ENCODE measurements at regions of chr11 and their contacts with region 1.

Region 1: DNA sequence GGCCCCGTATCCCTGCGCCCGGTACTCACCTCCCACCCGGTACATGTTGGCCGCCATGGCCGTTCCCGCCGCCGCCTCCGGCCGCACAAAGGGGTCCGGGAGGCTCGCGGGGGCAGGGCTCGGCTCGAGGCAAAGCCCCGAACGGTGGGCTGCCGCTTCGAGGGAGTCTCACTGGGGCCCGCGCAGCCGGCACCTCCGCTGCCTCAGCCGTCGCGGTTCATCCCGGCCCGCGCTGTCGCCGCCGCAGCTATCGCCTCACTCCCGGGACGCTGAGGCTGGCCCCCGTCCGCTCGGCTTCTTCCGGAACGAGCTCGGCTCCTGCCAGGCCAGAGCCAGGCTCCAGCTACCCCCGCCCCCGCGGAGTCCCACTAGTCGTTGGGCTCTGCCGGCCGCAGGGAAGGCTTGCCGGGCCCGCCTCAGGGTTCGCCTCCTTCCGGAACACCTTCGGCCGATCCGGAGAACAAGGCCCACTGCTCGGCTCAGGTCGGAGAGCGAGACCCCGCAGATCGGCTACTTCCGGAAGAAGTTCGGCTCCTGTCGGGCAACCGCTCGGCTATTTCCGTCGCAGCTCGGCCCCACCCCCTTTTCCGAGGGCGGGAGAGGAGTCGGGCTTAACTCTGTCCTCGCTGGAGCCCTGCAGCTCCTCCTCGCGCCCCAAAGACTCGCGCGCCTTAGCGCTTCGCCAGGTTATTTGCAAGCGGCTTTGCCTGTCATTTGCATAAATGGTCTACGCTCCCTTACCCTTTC is at the start of gene MTA2:
- DNase-seq: peak; percentile 95 to 100 (median 99)
- ATAC-seq: peak; percentile 82 to 83
- H3K4me3 Mint-ChIP-seq: peak within 1 kb of the TSS; percentile 88 to 95 (median 92)
- H3K27ac Mint-ChIP-seq: peak within 1 kb of the TSS; percentile 93 to 97 (median 96)
- H3K4me1 Mint-ChIP-seq: peaks cover 37 to 66% (median 62%) of the 10 kb centered on the region in 4 donors
- H3K27me3 Mint-ChIP-seq: no peaks in the 10 kb centered on the region
- polyA plus RNA-seq, gene MTA2: 15.8 to 32.6 (median 21.5) TPM

Region 2: GRCh38 chr11:62497132-62497915 is 104.2 kb before region 1 on chr11:
- POLR2A ChIA-PET with region 1: no interaction called
- DNase-seq: peak in 2 of 10 donors; percentile 8 to 9
- ATAC-seq: peak; percentile 20 to 52
- H3K4me3 Mint-ChIP-seq: no peak overlapping the region
- H3K27ac Mint-ChIP-seq: peak overlapping the region in 2 of 10 donors; percentile 3 to 14
- H3K4me1 Mint-ChIP-seq: peaks cover 0 to 11% (median 1%) of the 10 kb centered on the region in 4 donors
- H3K27me3 Mint-ChIP-seq: peaks cover under 1 to 9% (median 7%) of the 10 kb centered on the region in 5 donors

Region 3: DNA sequence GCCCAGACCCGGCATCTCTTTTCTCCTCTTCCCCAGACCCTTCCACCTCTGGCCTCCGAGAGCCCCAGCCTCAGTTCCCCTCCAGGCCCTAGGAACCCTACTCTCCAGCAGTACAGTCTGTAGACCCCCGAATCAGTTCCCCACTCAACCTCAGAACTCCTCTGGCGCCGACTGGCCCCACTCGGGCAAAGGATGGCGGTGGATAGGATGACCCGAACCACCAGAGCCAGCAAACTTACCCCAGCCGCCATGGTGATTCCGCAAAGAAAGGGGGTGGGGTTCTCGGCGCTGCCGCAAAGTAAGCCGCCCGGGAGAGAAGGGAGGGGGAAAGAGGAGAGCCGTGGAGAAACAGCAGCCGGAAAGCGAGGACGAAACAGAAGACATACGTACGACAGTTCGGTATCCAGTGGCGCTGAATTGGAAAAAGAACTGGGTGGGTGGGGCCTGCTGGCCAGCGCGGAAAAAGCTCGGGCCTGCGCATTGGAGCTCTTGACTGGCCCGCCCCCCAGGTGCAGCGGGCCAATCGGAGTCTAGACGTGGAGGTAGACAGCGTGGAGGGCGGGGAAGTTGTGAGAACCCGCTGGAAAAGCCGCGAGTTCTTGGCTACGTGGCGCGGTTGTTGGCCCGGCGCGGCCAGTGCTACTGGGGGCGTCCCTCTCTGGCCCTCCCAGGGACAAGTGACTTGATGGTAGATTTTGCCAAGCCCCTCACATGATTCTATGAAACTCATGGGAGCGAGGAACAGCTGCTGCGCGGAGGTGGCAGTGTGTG is 27.8 kb before region 1 on chr11 and contains the start of gene EEF1G:
- POLR2A ChIA-PET with region 1: interaction called, 18 read pairs
- DNase-seq: peak; percentile 94 to 100 (median 98)
- ATAC-seq: peak; percentile 91 to 92
- H3K4me3 Mint-ChIP-seq: peak within 1 kb of the TSS; percentile 93 to 99 (median 97)
- H3K27ac Mint-ChIP-seq: peak within 1 kb of the TSS; percentile 90 to 99 (median 98)
- H3K4me1 Mint-ChIP-seq: peaks cover 41 to 59% (median 53%) of the 10 kb centered on the region in 4 donors
- H3K27me3 Mint-ChIP-seq: no peaks in the 10 kb centered on the region
- polyA plus RNA-seq, gene EEF1G: 1,637 to 2,152 (median 1,960) TPM

Region 4: DNA sequence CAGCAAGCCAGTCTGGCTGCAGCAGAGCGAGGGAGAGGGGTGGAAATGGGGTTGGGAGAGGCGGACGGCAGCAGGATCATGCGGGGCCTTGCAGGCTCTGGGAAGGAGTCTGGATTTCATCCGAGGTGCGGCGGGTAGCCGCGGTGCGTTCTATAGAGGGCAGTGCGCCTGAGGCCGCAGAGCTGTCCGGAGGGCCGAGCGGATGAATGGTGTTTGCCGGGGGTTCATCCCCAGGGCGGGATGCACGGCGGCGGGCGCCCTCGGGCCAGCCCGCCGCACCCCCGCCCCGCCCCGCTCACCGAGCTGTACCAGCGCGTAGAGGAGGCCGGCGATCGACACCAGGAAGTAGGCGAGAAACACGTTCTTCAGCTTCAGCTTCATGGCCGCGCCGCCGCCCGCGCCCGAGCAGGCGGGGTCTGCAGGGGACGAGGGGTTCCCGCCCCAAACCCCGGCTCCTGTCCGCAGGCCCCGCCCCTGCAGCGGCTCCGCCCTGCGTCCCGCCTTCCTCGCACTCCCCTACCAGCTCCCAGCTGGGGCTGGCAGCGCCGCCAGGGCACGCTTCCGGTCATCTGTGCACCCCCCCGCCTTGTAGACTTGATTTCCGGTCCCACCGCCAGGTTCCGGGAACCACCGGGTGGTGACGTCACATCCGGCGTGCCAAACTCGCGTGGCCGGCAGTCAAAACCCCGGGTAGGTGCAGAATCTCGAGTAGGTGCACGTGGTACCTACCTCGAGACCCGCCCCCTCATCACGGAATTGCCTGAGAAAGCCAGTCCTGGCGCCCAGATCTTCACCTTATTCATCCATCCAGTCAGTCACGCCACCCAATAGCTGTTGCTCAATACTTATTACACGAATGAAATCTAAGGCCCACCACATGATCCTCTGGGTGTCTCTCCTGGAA is 20.3 kb after region 1 on chr11 and contains the start of gene B3GAT3:
- POLR2A ChIA-PET with region 1: interaction called, 24 read pairs
- DNase-seq: peak; percentile 87 to 98 (median 95)
- ATAC-seq: peak; percentile 83 to 85
- H3K4me3 Mint-ChIP-seq: peak within 1 kb of the TSS; percentile 86 to 97 (median 94)
- H3K27ac Mint-ChIP-seq: peak within 1 kb of the TSS; percentile 92 to 99 (median 98)
- H3K4me1 Mint-ChIP-seq: peaks cover 13 to 36% (median 32%) of the 10 kb centered on the region in 4 donors
- H3K27me3 Mint-ChIP-seq: peaks cover 0 to 2% (median 0%) of the 10 kb centered on the region in 5 donors
- polyA plus RNA-seq, gene B3GAT3: 35.6 to 51.3 (median 40.3) TPM

Region 5: DNA sequence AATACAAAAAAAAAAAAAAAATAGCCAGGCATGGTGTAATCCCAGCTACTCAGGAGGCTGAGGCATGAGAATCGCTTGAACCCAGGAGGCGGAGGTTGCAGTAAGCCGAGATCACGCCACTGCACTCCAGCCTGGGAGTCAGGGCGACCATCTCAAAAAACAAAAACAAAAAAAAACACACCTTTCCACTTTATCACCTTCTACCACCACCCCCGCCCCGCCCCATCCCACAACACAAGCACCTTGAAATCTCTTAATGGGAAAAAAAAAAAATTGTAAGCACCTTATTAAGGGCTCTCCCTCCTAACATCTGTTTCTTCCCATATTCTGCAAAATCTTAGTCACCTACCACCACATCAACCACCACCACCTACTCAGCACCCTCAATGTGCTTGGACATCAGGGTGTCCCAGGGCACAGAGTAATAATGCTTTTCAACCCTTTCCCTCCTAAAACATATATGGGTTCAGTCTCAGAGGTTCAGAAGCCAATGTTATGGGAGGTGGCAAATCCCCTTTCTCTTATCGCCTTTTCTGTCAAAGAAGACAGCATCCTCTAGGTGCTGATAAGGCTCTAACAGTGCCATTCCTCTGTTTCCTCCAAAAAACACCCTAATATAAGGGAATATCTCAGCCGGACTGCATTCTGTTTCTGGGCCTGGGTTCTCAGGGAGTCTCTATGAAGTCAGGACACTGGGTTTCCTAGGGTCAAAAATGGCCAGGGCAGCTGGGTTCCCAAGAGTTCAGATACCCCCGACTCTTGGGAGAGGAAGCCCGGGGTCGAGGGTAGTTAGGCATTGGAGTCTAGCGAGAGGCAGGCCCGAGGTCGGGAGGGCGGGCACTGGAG is 50.8 kb after region 1 on chr11:
- POLR2A ChIA-PET with region 1: interaction called, 14 read pairs
- DNase-seq: peak in 4 of 10 donors; percentile 34 to 57 (median 44)
- ATAC-seq: peak; percentile 6 to 49
- H3K4me3 Mint-ChIP-seq: peak overlapping the region; percentile 86 to 96 (median 92)
- H3K27ac Mint-ChIP-seq: peak overlapping the region; percentile 82 to 100 (median 94)
- H3K4me1 Mint-ChIP-seq: peaks cover 12 to 37% (median 21%) of the 10 kb centered on the region in 4 donors
- H3K27me3 Mint-ChIP-seq: no peaks in the 10 kb centered on the region

Region 6: GRCh38 chr11:62855571-62856332 is 254.2 kb after region 1 on chr11:
- POLR2A ChIA-PET with region 1: interaction called, 12 read pairs
- DNase-seq: peak; percentile 94 to 99 (median 98)
- ATAC-seq: peak; percentile 87 to 90
- H3K4me3 Mint-ChIP-seq: peak overlapping the region; percentile 95 to 99 (median 98)
- H3K27ac Mint-ChIP-seq: peak overlapping the region; percentile 88 to 99 (median 98)
- H3K4me1 Mint-ChIP-seq: peaks cover 33 to 54% (median 52%) of the 10 kb centered on the region in 4 donors
- H3K27me3 Mint-ChIP-seq: peaks cover 0 to 4% (median 0%) of the 10 kb centered on the region in 5 donors